Sigmoid colon (tissue), 7 donors: ENCODE measurements at regions of chr11 and their contacts with region 1.

Region 1: GRCh38 chr11:67442504-67443405 is 521 bp downstream of the CORO1B start:
- DNase-seq: no peak
- H3K4me3 ChIP-seq: peak overlapping the region; percentile 80 to 95 (median 86)
- H3K27ac ChIP-seq: peak overlapping the region; percentile 95 to 98 (median 96)
- H3K4me1 ChIP-seq: peaks cover 0 to 31% (median 21%) of the 10 kb centered on the region in 4 donors
- H3K27me3 ChIP-seq: no peaks in the 10 kb centered on the region
- CTCF ChIP-seq: no peak
- EP300 ChIP-seq: no peak
- POLR2A ChIP-seq: no peak

Region 2: DNA sequence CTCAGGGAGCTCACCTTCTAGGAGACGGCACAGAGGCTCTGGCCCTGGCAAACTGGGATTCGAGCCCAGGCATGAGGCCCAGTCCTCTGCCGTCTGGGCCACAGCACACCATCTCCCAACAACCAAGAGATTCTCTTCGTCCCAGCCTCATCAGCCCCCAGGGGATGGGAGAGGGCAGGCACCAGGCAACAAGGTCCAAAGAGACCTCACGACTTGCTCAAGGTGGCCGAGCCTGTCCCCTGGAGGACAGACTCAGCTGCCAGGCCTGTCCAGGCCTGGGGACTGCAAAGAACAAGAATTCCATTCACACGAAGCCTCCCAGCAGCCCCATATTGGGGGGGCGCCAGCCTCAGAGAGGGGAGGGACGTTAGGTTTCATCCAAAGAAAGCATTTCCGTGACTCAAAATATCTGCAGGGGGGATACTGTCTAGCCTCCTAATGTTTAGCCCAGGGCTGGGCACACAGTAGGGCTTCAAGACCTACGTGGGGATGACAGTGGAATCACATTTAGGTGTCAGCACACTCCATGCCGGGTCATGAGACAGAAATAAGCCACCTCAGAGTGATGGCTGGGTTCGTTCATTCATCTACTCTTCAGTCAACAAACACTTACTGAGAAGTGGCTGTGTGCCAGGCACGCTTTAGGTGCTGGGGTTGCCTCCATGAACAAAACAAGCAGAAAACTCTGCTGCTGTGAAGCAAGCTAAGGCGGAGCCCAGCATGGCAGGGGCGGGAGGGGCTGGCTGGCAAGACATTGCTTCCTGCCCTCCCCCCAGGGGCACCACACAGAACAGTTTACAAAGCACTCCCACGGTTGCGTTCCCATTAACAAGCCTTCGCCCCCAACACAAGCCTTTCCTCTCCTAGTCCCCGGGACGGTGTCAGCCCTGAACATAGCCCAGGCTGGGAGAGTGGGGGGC is 26.1 kb before region 1 on chr11:
- intact Hi-C with region 1: no loop called
- DNase-seq: no peak
- H3K4me3 ChIP-seq: no peak overlapping the region
- H3K27ac ChIP-seq: peak overlapping the region in 1 of 4 donors; percentile 51
- H3K4me1 ChIP-seq: peaks cover 0 to 49% (median 35%) of the 10 kb centered on the region in 4 donors
- H3K27me3 ChIP-seq: peaks cover 11 to 36% (median 11%) of the 10 kb centered on the region in 3 donors
- CTCF ChIP-seq: no peak
- EP300 ChIP-seq: no peak
- POLR2A ChIP-seq: no peak

Region 3: GRCh38 chr11:67428052-67428914 is 14.5 kb before region 1 on chr11 and contains the start of gene RPS6KB2:
- intact Hi-C with region 1: loop called (anchors 1 kb)
- DNase-seq: peak; percentile 99
- H3K4me3 ChIP-seq: peak within 1 kb of the TSS; percentile 66 to 91 (median 72)
- H3K27ac ChIP-seq: peak within 1 kb of the TSS; percentile 87 to 92 (median 90)
- H3K4me1 ChIP-seq: peaks cover 0 to 19% (median 18%) of the 10 kb centered on the region in 4 donors
- H3K27me3 ChIP-seq: no peaks in the 10 kb centered on the region
- CTCF ChIP-seq: no peak
- EP300 ChIP-seq: peak in 1 of 4 donors; percentile 85
- POLR2A ChIP-seq: peak; percentile 93 to 94
- total RNA-seq, gene RPS6KB2: 27.1 to 70.2 (median 35.2) TPM